ENCODE measurements at regions of chr2 and their contacts with region 1.

Region 1: DNA sequence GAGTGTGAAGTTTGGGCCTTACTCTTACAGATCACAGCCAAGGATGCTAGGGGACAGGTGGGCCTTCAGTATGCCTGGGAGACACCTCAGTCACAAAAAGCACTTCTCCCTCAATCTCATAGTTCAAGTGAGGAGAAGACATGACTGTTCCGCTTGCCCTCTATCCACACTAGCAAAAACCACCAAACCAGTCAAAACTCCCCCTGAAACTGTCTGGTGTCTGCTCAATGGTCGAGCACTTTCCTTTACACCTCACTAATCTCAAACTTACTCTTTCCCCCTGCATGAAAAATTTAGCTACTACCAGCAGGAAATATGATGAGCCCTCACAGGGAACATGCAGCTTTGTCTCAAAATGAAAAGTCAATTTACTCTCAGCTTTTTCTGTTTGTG is 232.2 kb downstream of the TRIB2 start:
- DNase-seq: no peak
- ATAC-seq: no peak
- H3K4me3 ChIP-seq: no peak overlapping the region
- H3K27ac ChIP-seq: no peak overlapping the region
- H3K4me1 ChIP-seq: no peaks in the 10 kb centered on the region
- H3K27me3 ChIP-seq: no peaks in the 10 kb centered on the region
- CTCF ChIP-seq: no peak
- POLR2A ChIP-seq: no peak

Region 2: DNA sequence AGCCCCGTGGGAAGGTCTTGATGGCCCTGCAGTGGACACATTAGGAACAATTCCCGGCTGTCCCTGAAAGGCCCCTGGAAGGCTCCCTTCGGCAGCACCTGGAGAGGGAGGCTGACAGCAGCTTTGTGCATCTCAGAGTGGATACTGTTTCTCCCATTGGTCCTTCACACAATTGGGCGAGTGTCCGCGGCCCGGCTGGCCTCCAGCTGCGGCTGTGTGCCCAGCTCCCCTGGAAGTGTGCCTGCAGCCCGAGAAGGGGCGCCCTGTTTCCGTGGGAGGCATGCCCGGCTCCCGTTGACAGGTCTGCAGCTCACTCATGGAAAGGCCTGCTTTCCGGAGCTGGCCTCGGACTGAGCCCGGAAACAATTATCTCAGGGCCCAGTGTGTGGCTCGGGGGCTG is 1098.9 kb before region 1 on chr2:
- intact Hi-C with region 1: loop called (anchors 10 kb)
- DNase-seq: peak in 1 of 4 donors; percentile 14
- ATAC-seq: no peak
- H3K4me3 ChIP-seq: no peak overlapping the region
- H3K27ac ChIP-seq: no peak overlapping the region
- H3K4me1 ChIP-seq: no peaks in the 10 kb centered on the region
- H3K27me3 ChIP-seq: no peaks in the 10 kb centered on the region
- CTCF ChIP-seq: no peak
- POLR2A ChIP-seq: no peak

Region 3: DNA sequence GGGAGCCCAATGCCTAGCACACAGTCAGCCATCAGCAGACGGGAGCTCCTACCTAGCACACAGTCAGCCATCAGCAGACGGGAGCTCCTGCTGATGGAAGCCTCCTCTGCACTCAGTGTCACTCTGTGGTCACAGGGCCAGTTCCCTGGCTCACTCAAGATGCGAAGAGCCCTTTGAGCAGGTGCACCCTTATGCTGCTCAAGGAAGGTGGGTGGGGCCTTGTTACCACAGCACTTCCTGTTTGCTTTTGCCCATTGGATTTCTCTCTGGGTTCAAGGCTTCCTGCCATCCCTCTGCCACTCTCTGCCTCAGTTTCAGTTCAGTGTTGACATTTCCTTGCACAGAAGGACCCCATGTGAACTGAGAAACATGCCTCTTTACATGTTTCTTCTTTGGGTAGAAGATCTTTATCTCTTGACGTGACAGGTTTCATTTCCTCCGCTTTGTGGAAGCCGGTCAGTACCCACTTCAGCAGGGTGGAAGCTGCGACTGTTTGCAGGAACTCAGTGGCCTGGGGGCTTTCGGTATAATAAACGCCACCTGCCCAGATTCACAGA is 220.7 kb before region 1 on chr2:
- intact Hi-C with region 1: no loop called
- DNase-seq: no peak
- ATAC-seq: no peak
- H3K4me3 ChIP-seq: no peak overlapping the region
- H3K27ac ChIP-seq: no peak overlapping the region
- H3K4me1 ChIP-seq: peaks cover 13% of the 10 kb centered on the region
- H3K27me3 ChIP-seq: no peaks in the 10 kb centered on the region
- CTCF ChIP-seq: no peak
- POLR2A ChIP-seq: no peak

Region 4: GRCh38 chr2:12769492-12770105 is 179.4 kb before region 1 on chr2:
- intact Hi-C with region 1: no loop called
- DNase-seq: peak in 2 of 4 donors; percentile 36
- ATAC-seq: peak; percentile 56
- H3K4me3 ChIP-seq: no peak overlapping the region
- H3K27ac ChIP-seq: no peak overlapping the region
- H3K4me1 ChIP-seq: no peaks in the 10 kb centered on the region
- H3K27me3 ChIP-seq: no peaks in the 10 kb centered on the region
- CTCF ChIP-seq: no peak
- POLR2A ChIP-seq: no peak

Region 5: GRCh38 chr2:12897181-12897580 is 51.8 kb before region 1 on chr2:
- intact Hi-C with region 1: no loop called
- DNase-seq: no peak
- ATAC-seq: no peak
- H3K4me3 ChIP-seq: no peak overlapping the region
- H3K27ac ChIP-seq: no peak overlapping the region
- H3K4me1 ChIP-seq: no peaks in the 10 kb centered on the region
- H3K27me3 ChIP-seq: no peaks in the 10 kb centered on the region
- CTCF ChIP-seq: no peak
- POLR2A ChIP-seq: no peak

Measured in body of pancreas (tissue), 4 donors.